ENCODE measurements at regions of chr19 and their contacts with region 1.

Region 1: DNA sequence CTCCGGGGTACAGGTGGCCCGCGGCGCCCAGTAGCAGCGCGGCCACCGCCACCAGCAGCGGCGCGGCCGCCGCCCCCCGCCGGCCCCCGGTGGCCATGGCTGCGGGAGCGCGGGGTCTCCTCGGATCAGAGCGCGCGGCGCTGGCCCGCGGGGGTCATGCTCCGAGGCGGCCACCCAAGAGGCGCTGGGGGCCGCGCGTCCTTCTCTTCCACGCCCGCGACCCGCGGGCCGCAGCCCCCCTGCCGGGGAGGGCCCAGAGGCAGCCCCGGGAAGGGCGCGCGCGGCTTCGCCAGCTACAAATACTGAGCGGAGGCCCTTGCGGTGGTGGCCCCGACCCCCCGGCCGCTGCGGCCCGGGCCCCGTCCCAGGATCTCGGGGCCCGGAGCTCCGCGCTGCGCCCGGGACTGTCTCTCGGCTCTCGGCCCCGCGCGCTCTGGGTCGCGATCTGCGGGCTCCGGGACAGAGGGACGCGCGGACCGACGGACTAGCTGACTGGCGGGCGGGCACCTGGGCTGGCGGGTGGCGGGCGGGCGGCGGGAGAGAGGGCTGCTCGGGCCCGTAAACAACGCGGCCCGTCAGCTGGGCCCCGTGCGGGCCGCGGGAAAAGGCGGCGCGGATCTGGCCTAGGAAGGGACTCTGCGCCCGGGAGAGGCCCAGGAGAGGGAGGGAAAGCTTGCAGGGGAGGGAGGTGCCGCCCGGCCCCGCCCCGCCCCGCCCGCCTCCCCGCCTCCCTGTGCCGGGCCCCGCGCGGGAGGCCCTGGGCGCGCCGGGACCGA is at the start of gene INSR:
- DNase-seq: peak; percentile 91
- ATAC-seq: peak; percentile 96
- total RNA-seq, gene INSR: 62.6 TPM

Region 2: DNA sequence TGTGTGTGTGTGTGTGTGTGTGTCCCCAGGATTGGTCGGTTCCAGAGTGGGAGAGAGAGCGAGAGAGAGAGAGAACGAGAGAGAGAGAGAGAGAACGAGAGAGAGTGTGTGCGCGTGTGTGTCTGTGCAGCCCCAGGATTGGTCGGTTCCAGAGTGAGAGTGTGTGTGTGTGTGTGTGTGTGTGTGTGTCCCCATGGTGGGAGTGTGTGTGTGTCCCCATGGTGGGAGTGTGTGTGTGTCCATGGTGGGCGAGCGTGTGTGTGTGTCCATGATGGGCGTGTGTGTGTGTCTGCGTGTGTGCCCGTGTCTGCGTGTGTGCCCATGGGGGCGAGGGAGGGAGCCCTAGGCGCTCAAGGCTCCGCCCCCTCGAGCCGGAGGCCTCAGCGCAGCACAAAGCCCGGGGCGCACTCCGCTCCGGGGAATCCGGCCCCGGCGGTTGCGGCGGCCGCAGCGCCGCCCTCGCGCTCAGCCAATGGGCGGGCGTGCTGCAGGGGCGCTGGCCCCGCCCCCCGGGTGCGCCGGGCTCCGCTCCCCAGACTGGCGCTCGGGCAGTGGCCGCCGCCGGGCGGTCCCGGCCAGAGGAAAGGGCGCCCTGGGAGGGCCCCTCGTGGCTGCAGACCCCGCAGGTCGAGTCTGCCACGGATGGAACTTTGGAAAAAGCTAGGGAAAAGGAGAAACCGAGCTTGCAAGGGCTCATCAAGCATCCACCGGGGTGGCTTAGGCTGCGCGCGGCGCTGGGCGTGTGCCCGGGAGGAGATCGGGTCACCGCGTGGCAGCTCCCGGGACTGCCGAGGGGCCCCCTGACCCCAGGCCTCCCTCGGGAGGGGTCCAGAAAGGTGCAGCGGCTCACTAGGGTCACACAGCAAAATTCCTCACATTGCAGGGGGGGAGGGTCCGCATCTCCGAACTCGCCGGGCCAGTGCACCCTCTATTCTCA is 96.0 kb before region 1 on chr19:
- intact Hi-C with region 1: loop called (anchors 2 kb)
- DNase-seq: peak; percentile 93
- ATAC-seq: peak; percentile 94

Region 3: DNA sequence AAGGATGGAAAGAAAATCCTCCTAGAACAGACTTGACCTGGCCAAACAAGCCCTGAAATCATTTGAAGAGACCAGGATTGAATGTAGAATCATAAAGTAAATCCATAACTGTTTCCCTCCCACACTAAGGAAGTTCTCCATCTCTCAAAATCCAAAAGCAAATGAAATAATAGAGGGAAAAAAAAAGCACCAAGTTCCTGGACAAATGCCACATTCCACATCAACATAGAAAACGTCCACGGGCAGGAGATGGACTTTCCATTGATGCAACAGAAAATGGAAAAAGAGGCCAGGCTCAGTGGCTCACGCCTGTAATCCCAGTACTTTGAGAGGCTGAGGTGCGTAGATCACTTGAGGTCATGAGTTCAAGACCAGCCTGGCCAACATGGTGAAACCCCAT is 55.9 kb before region 1 on chr19:
- intact Hi-C with region 1: loop called (anchors 2 kb)
- DNase-seq: no peak
- ATAC-seq: no peak

Measured in sciatic nerve (tissue), 2 donors.